CD4-positive, alpha-beta T cell (primary cell): ENCODE measurements at regions of chr7 and their contacts with region 1.

Region 1: GRCh38 chr7:112449902-112450806 is at the start of gene IFRD1:
- DNase-seq: peak; percentile 95 to 100 (median 98)
- ATAC-seq: peak; percentile 82
- H3K4me3 ChIP-seq: peak within 1 kb of the TSS; percentile 91
- H3K4me3 Mint-ChIP-seq: peak within 1 kb of the TSS; percentile 100
- H3K27ac ChIP-seq: peak within 1 kb of the TSS; percentile 98 to 100
- H3K27ac Mint-ChIP-seq: peak within 1 kb of the TSS; percentile 99
- H3K4me1 ChIP-seq: peaks cover 28% of the 10 kb centered on the region
- H3K4me1 Mint-ChIP-seq: peaks cover 51% of the 10 kb centered on the region
- H3K27me3 ChIP-seq: no peaks in the 10 kb centered on the region
- H3K27me3 Mint-ChIP-seq: no peaks in the 10 kb centered on the region
- CTCF ChIP-seq: no peak
- total RNA-seq, gene IFRD1: 198 to 205 TPM

Region 2: DNA sequence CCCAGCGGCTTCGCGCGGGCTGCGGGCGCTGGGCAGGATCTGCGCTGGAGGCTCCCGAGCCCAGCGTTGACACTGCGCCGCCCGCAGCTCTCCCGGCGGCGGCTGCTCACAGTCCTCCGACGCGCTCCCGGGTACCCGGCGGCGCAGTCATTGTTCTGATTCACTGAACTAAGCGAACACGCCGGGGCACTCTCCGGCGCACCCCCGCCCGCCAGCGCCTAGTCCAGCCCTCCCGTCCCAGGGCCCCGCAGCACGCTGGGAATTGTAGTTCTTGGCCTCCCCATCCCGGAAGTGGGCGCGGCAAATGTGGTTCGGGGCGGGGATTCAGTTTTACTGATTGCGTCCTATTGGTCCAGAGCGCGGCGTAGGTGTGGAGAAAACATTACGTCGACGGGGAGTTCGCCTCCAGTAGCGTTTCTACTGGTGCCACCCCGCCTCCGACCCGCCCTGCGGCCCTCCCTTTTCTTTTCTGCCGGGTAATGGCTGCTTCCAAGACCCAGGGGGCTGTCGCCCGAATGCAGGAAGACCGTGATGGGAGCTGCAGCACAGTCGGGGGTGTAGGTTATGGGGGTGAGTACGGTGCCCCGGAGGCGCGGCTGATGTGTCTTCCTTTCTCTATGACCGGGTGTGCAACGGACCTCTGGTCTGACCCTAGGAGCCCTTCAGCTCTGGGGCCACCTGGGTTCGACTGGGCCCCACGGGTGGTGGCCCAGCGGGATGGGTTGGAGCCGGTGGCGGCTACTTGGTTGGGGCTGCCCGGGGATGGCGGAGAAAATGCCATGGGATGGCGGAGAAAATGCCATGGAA is 243.7 kb before region 1 on chr7 and contains the starts of genes DOCK4 and ZNF277:
- CTCF ChIA-PET with region 1: interaction called, 3 read pairs
- POLR2A ChIA-PET with region 1: interaction called, 35 read pairs
- intact Hi-C with region 1: loop called (anchors 1 to 2 kb)
- DNase-seq: peak; percentile 98 to 100 (median 99)
- ATAC-seq: peak; percentile 87
- H3K4me3 ChIP-seq: peak within 1 kb of the TSS; percentile 87
- H3K4me3 Mint-ChIP-seq: peak within 1 kb of the TSS; percentile 99
- H3K27ac ChIP-seq: peak within 1 kb of the TSS in 1 of 2 donors; percentile 48
- H3K27ac Mint-ChIP-seq: peak within 1 kb of the TSS; percentile 91
- H3K4me1 ChIP-seq: peaks cover 29% of the 10 kb centered on the region
- H3K4me1 Mint-ChIP-seq: peaks cover 55% of the 10 kb centered on the region
- H3K27me3 ChIP-seq: peaks cover 18 to 30% of the 10 kb centered on the region in 2 experiments
- H3K27me3 Mint-ChIP-seq: peaks cover 30% of the 10 kb centered on the region
- CTCF ChIP-seq: no peak
- total RNA-seq, gene DOCK4: 0.31 to 0.38 TPM
- total RNA-seq, gene ZNF277: 21.6 to 22.5 TPM

Region 3: GRCh38 chr7:112422842-112423496 is 27.2 kb before region 1 on chr7:
- CTCF ChIA-PET with region 1: no interaction called
- POLR2A ChIA-PET with region 1: interaction called, 19 read pairs
- intact Hi-C with region 1: no loop called
- DNase-seq: peak in 3 of 14 experiments; percentile 17 to 36 (median 21)
- ATAC-seq: no peak
- H3K4me3 ChIP-seq: no peak overlapping the region
- H3K4me3 Mint-ChIP-seq: no peak overlapping the region
- H3K27ac ChIP-seq: no peak overlapping the region
- H3K27ac Mint-ChIP-seq: no peak overlapping the region
- H3K4me1 ChIP-seq: peaks cover 15% of the 10 kb centered on the region
- H3K4me1 Mint-ChIP-seq: peaks cover 24% of the 10 kb centered on the region
- H3K27me3 ChIP-seq: no peaks in the 10 kb centered on the region
- H3K27me3 Mint-ChIP-seq: no peaks in the 10 kb centered on the region
- CTCF ChIP-seq: no peak

Region 4: GRCh38 chr7:112789817-112790585 is 339.8 kb after region 1 on chr7 and contains the start of gene TMEM168:
- CTCF ChIA-PET with region 1: no interaction called
- POLR2A ChIA-PET with region 1: no interaction called
- intact Hi-C with region 1: loop called (anchors 5 to 10 kb)
- DNase-seq: peak; percentile 80 to 92 (median 84)
- ATAC-seq: peak; percentile 91
- H3K4me3 ChIP-seq: peak within 1 kb of the TSS; percentile 95
- H3K4me3 Mint-ChIP-seq: peak within 1 kb of the TSS; percentile 92
- H3K27ac ChIP-seq: peak within 1 kb of the TSS; percentile 65 to 79
- H3K27ac Mint-ChIP-seq: peak within 1 kb of the TSS; percentile 77
- H3K4me1 ChIP-seq: peaks cover 22% of the 10 kb centered on the region
- H3K4me1 Mint-ChIP-seq: peaks cover 46% of the 10 kb centered on the region
- H3K27me3 ChIP-seq: no peaks in the 10 kb centered on the region
- H3K27me3 Mint-ChIP-seq: no peaks in the 10 kb centered on the region
- CTCF ChIP-seq: no peak
- total RNA-seq, gene TMEM168: 11.5 to 11.9 TPM

Region 5: DNA sequence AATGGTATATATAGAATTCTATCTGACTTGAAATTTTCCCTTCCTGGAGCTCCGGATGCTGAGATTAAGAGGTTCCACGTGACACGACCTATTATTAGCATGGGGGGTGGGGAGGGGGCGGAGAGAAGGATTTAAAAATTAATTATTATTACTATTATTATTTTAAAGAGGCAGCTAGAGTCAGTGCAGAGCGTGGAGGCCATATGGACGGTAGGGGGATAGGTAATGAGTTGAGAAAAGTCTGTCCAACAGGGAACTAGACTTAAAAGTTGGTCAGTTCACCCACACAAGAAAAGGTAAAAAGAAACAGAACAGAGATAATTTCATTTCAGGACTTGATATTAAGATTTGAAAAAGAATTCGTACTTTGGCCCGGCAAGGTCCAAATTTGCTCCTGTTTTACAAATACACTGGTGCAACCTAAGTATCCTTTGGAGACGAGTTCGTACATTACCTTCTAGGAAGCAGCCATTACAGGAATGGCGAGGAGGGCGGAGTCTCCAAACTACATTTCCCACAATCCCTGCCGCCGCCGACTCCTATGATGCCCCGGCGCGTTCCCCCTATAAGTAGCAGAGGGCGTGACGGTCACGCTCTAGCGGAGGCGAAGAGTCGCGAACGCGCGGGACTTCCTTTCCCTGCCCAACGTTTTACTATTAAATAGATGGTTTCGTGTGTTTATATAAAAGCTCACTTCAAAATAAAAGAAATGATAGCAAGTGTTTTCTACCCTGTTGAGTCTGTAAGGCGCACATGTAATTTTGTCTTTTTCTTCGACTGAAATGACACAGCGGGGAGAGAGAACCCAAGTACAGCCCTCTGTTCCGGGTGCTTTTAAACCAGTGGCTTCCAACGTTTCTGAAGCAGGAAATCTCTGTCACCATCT is 668.2 kb after region 1 on chr7 and contains the start of gene SMIM30:
- CTCF ChIA-PET with region 1: no interaction called
- POLR2A ChIA-PET with region 1: interaction called, 3 read pairs
- intact Hi-C with region 1: loop called in 1 of 2 experiments (anchors 5 kb)
- DNase-seq: peak; percentile 79 to 94 (median 86)
- ATAC-seq: peak; percentile 100
- H3K4me3 ChIP-seq: peak within 1 kb of the TSS; percentile 72
- H3K4me3 Mint-ChIP-seq: peak within 1 kb of the TSS; percentile 94
- H3K27ac ChIP-seq: peak within 1 kb of the TSS; percentile 49 to 86
- H3K27ac Mint-ChIP-seq: peak within 1 kb of the TSS; percentile 88
- H3K4me1 ChIP-seq: peaks cover 4% of the 10 kb centered on the region
- H3K4me1 Mint-ChIP-seq: peaks cover 21% of the 10 kb centered on the region
- H3K27me3 ChIP-seq: no peaks in the 10 kb centered on the region
- H3K27me3 Mint-ChIP-seq: no peaks in the 10 kb centered on the region
- CTCF ChIP-seq: no peak
- total RNA-seq, gene SMIM30: 2.7 to 3.5 TPM